IMR-90 (cell line): ENCODE measurements at regions of chr2 and their contacts with region 1.

Region 1: GRCh38 chr2:178414266-178415247 is 36.4 kb downstream of the PRKRA start:
- DNase-seq: peak; percentile 94
- ATAC-seq: peak; percentile 87
- H3K4me3 ChIP-seq: peak overlapping the region; percentile 65
- H3K27ac ChIP-seq: no peak overlapping the region
- H3K4me1 ChIP-seq: 0 out of 2 replicates have a peak, but pooled peaks cover 2% of the 10 kb centered on the region
- H3K27me3 ChIP-seq: no peaks in the 10 kb centered on the region
- CTCF ChIP-seq: peak; percentile 95
- POLR2A ChIP-seq: no peak; the same call in 1 of the 2 replicates
- RAD21 ChIP-seq: peak; percentile 85

Region 2: DNA sequence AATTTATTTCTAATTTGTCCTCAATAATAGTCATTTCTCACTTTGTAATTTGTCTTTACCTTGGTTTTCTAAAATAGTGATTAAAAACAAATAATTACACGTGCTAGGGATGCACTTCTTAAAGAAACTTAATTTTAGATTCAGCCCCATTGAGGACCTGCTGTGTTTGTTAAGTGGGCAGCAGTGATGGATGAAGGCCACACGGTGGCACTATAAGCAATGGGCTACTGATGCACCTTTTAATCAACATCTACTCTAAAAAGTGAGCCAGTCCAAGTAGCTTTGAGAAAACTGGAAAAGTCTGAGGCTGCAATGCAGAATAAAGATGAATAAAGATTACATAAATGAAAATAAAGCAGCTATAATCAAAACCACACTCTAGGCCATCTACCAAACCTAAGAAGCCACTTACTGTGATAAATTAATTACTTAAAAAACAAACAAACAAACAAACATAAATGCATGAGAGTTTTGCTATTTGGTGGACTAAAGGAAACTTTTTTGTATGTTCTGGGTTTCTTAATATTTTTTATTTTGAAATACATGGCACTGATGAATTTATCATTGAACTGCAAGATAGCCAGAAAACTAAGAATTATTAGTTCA is 431.3 kb before region 1 on chr2:
- CTCF ChIA-PET with region 1: no interaction called
- POLR2A ChIA-PET with region 1: no interaction called
- dilution Hi-C with region 1: no loop called
- in situ Hi-C with region 1: no loop called
- intact Hi-C with region 1: loop called (anchors 2 kb)
- DNase-seq: peak; percentile 71
- ATAC-seq: peak; percentile 96
- H3K4me3 ChIP-seq: no peak overlapping the region
- H3K27ac ChIP-seq: no peak overlapping the region
- H3K4me1 ChIP-seq: no peaks in the 10 kb centered on the region
- H3K27me3 ChIP-seq: no peaks in the 10 kb centered on the region; the same call in 1 of the 2 replicates
- CTCF ChIP-seq: peak; percentile 86
- POLR2A ChIP-seq: no peak
- RAD21 ChIP-seq: peak; percentile 84

Region 3: GRCh38 chr2:178128836-178129630 is 285.5 kb before region 1 on chr2:
- CTCF ChIA-PET with region 1: interaction called, 14 read pairs
- POLR2A ChIA-PET with region 1: no interaction called
- dilution Hi-C with region 1: no loop called
- in situ Hi-C with region 1: loop called (anchors 5 kb)
- intact Hi-C with region 1: loop called (anchors 1 kb)
- DNase-seq: peak; percentile 32
- ATAC-seq: no peak
- H3K4me3 ChIP-seq: no peak overlapping the region
- H3K27ac ChIP-seq: no peak overlapping the region
- H3K4me1 ChIP-seq: peaks cover 5% of the 10 kb centered on the region
- H3K27me3 ChIP-seq: no peaks in the 10 kb centered on the region
- CTCF ChIP-seq: no peak
- POLR2A ChIP-seq: no peak
- RAD21 ChIP-seq: no peak

Region 4: DNA sequence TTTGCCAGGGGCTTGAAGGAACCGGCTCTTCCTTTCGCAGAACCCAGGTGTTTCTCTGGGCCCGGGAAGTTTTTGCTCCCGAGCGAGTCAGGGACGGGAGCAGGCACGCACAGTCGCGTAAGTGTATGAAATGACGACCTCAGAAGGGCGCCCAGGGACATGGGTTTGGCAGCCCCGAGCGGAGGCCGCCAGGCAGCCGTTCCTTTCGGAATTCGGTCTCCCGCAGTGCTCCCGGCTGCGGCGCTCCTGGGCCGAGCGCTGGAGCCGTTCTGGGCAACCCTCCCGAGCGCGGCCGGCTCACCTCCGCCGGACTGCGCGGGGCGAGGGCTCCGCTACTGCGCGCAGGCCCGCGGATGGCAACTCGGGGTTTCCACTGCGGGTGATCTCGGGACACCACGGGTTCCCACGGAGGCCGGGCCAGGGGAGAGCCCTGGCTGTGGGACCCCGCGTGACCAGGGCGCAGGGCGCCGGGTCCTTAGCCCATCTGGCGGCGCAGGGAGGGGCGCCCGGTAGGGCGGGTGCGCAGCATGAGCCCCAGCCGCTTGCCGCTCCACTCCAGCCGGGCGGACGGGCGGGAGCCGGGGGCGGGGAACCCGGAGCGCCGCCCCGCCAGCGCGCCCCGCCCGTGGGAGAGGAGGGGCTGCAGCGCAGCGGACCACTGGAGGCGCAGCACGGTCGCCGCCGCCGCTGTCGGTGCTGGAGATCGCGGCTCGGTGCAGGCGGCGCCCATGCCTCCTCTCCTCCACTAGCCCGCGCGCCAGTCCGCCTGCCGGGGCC is 220.5 kb before region 1 on chr2 and contains the start of gene OSBPL6:
- CTCF ChIA-PET with region 1: no interaction called
- POLR2A ChIA-PET with region 1: no interaction called
- dilution Hi-C with region 1: no loop called
- in situ Hi-C with region 1: no loop called
- intact Hi-C with region 1: loop called (anchors 2 kb)
- DNase-seq: peak; percentile 82
- ATAC-seq: peak; percentile 92
- H3K4me3 ChIP-seq: peak within 1 kb of the TSS; percentile 90
- H3K27ac ChIP-seq: peak within 1 kb of the TSS; percentile 31; the same call in 1 of the 2 replicates
- H3K4me1 ChIP-seq: no peaks in the 10 kb centered on the region
- H3K27me3 ChIP-seq: no peaks in the 10 kb centered on the region
- CTCF ChIP-seq: peak; percentile 35
- POLR2A ChIP-seq: no peak
- RAD21 ChIP-seq: no peak; the same call in 1 of the 2 replicates
- total RNA-seq, gene OSBPL6: 2.8 and 3.2 TPM in 2 replicates

Region 5: DNA sequence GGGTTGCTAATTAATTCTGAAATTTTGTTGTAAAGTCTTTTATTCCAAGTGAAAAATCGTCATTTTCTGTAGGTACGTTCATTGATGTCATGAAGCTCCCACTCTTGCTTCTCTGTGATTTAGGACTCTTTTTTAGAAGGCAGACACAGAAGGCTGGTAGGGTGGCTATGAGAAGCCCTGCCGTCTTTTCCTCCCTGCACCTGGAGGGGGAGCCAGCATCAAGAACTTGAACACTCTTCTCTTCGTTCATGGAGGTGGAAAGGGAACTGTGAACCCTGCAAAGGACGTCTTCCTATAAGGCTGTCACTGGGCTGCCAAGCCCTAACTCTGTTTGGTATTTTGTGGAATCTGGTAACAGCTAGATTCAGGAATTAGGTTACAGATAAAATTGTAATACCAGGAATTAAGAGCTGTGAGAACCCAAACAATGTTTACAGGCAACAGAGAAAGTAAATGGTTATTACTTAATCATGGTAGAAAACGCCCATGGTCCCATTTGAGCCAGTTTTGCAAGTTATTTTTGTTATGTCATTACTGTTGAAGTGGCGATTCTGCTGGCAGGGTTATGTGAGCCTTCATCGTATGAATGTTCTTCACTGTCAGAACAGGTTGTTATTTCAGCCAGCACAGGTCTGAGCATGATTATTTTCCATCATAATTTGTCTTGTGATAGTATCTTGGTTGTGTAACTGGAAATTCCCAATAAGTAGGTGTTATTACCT is 108.0 kb before region 1 on chr2:
- CTCF ChIA-PET with region 1: interaction called, 11 read pairs
- POLR2A ChIA-PET with region 1: no interaction called
- dilution Hi-C with region 1: no loop called
- in situ Hi-C with region 1: no loop called
- intact Hi-C with region 1: loop called (anchors 1 kb)
- DNase-seq: peak; percentile 58
- ATAC-seq: peak; percentile 98
- H3K4me3 ChIP-seq: no peak overlapping the region
- H3K27ac ChIP-seq: no peak overlapping the region
- H3K4me1 ChIP-seq: no peaks in the 10 kb centered on the region
- H3K27me3 ChIP-seq: no peaks in the 10 kb centered on the region
- CTCF ChIP-seq: peak; percentile 66
- POLR2A ChIP-seq: no peak
- RAD21 ChIP-seq: peak; percentile 62

Region 6: DNA sequence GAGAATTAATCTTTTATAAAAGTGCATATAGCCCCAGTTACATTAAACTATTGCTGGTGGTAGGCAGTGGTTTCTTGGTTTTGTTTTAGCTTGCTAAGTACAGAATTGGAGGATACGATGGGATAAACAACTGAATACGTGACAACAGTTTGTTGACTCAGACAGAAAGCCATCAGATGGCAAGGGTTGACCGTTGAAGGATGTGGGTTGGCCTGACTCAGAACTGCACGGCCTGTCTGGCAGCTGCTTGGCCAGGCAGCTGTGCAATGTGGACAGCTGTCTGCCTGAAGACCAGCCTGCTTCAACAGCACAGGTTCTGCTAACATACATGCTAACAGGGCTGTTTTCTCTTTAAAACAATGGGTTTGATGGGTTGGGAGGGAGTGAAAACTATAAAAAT is 10.2 kb before region 1 on chr2:
- CTCF ChIA-PET with region 1: interaction called, 18 read pairs
- POLR2A ChIA-PET with region 1: no interaction called
- dilution Hi-C with region 1: no loop called
- in situ Hi-C with region 1: no loop called
- intact Hi-C with region 1: no loop called
- DNase-seq: peak; percentile 95
- ATAC-seq: peak; percentile 93
- H3K4me3 ChIP-seq: no peak overlapping the region
- H3K27ac ChIP-seq: no peak overlapping the region
- H3K4me1 ChIP-seq: peaks cover 3% of the 10 kb centered on the region
- H3K27me3 ChIP-seq: no peaks in the 10 kb centered on the region
- CTCF ChIP-seq: no peak
- POLR2A ChIP-seq: no peak
- RAD21 ChIP-seq: no peak

Region 7: DNA sequence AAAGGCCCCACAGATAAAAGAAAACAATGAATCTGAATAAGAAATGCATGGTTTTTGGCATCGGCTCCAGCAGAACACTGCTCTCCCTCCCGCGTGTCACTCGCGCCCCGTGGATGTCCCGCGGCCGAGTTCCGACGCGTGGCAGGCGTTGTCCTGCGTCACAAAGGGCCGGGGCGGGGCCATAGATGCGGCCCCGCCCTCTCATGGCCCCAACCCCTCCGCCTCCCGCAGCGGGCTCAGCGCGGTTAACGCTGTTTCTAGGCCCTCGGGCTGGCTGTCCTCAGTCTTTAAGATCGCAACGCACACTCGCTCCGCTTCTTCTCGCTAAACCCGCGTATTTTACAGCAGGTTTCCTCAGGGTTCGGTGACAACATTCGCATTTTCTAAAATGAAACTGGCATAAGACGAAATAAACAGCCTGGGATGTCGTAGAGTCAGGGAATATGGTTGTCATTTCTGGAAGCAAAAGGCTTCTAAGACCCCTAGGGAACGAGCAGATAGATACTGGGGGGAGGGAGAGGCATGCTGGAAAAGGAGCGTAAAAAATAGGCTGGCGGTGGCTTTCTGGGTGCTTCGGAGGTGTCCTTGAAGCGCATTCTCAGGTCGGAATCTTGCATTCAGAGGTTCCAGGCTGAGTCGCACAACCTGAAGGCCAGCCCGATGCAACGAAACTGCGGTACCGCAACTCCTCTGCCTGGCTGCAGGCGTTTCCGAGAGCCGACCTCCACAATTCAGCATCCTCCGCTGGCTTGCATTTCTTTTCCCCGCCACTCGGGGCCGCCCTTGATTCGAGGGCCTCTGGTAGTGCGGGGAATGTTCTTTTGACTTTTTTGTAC is 64.1 kb after region 1 on chr2 and contains the start of gene FKBP7:
- CTCF ChIA-PET with region 1: no interaction called
- POLR2A ChIA-PET with region 1: interaction called, 12 read pairs
- dilution Hi-C with region 1: no loop called
- in situ Hi-C with region 1: no loop called
- intact Hi-C with region 1: no loop called
- DNase-seq: peak; percentile 77
- ATAC-seq: peak; percentile 69
- H3K4me3 ChIP-seq: peak within 1 kb of the TSS; percentile 83
- H3K27ac ChIP-seq: peak within 1 kb of the TSS; percentile 91
- H3K4me1 ChIP-seq: peaks cover 7% of the 10 kb centered on the region
- H3K27me3 ChIP-seq: no peaks in the 10 kb centered on the region
- CTCF ChIP-seq: peak; percentile 62
- POLR2A ChIP-seq: peak; percentile 84
- RAD21 ChIP-seq: peak; percentile 47
- total RNA-seq, gene FKBP7: 32.6 and 36.9 TPM in 2 replicates